ENCODE measurements at regions of chr10 and their contacts with region 1.

Region 1: DNA sequence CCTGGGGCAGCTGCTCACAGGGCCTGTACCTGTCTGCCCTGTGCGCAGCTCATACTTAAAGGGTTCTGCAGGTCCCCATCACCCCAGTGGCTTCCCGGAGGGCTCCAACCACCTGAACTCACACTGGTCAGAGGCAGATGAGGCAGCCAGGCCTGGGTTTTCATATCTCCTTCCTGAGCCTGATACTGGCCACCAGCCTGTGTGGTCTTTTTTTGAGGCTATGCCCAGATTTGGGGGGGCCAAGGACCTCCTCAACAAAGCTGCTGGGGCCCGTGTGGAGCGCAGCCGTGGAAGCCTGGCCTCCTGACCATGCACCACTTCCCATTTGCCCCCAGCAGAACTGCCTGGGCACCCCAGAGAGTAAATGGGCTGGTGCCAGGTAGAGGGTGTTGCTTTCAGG is 25.7 kb downstream of the PNLIPRP2 start:
- DNase-seq: no peak
- H3K4me3 Mint-ChIP-seq: no peak overlapping the region
- H3K27ac Mint-ChIP-seq: no peak overlapping the region
- H3K4me1 Mint-ChIP-seq: no peaks in the 10 kb centered on the region
- H3K27me3 Mint-ChIP-seq: peaks cover 39% of the 10 kb centered on the region
- CTCF ChIP-seq: no peak

Region 2: GRCh38 chr10:116364868-116365267 is 281.6 kb before region 1 on chr10:
- CTCF ChIA-PET with region 1: no interaction called
- POLR2A ChIA-PET with region 1: no interaction called
- intact Hi-C with region 1: no loop called
- DNase-seq: no peak
- H3K4me3 Mint-ChIP-seq: no peak overlapping the region
- H3K27ac Mint-ChIP-seq: no peak overlapping the region
- H3K4me1 Mint-ChIP-seq: no peaks in the 10 kb centered on the region
- H3K27me3 Mint-ChIP-seq: no peaks in the 10 kb centered on the region
- CTCF ChIP-seq: no peak

Region 3: GRCh38 chr10:116627386-116627933 is 19.0 kb before region 1 on chr10:
- CTCF ChIA-PET with region 1: interaction called, 12 read pairs
- POLR2A ChIA-PET with region 1: interaction called, 3 read pairs
- intact Hi-C with region 1: no loop called
- DNase-seq: peak; percentile 8
- H3K4me3 Mint-ChIP-seq: no peak overlapping the region
- H3K27ac Mint-ChIP-seq: no peak overlapping the region
- H3K4me1 Mint-ChIP-seq: no peaks in the 10 kb centered on the region
- H3K27me3 Mint-ChIP-seq: peaks cover 5% of the 10 kb centered on the region
- CTCF ChIP-seq: no peak